ENCODE measurements at regions of chr6 and their contacts with region 1.

Region 1: DNA sequence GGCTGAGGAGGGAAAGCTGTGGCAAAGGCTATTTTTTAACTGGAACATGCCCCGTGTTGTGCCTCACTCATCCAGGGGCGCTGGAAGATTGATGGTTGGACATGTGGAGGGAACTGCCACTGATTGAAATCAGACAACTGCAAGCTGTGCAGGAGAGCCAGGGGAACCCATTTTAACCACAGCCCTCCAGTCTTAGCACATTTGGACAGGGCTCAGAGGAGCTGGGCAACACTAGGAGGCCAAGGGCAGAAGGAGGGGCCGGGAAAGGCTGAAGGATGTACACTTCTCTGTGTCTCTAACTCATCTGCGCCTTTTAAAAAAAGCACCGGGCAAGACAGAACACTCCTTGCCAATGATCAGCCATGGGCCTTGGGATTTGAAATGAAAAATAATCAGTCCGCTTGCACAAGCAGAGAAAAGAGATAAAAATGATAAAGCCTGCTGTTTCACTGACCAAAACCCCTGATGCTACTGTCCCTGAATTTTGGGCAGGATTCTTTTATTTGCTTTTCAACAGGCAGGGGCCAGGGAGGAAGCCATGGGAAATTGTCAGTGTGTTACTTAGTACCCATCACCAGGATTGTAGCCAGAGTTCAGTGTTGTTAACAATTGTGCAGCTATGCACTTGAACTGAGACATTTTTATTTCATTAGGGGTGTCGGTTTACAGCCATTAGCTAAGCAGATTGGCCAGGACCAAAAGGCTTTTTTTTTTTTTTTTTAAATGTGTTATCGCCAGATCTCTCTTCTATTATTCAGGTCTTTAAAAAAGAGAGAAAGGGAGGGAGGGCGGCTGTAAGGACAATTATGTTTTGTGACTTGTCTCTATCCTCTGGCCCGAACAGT is 109.3 kb upstream of the EYA4 start:
- DNase-seq: peak in 1 of 3 donors; percentile 48
- ATAC-seq: peak; percentile 64 to 65
- H3K4me3 ChIP-seq: no peak overlapping the region
- H3K27ac ChIP-seq: peak overlapping the region; percentile 92
- H3K4me1 ChIP-seq: peaks cover 4% of the 10 kb centered on the region
- H3K27me3 ChIP-seq: no peaks in the 10 kb centered on the region

Region 2: DNA sequence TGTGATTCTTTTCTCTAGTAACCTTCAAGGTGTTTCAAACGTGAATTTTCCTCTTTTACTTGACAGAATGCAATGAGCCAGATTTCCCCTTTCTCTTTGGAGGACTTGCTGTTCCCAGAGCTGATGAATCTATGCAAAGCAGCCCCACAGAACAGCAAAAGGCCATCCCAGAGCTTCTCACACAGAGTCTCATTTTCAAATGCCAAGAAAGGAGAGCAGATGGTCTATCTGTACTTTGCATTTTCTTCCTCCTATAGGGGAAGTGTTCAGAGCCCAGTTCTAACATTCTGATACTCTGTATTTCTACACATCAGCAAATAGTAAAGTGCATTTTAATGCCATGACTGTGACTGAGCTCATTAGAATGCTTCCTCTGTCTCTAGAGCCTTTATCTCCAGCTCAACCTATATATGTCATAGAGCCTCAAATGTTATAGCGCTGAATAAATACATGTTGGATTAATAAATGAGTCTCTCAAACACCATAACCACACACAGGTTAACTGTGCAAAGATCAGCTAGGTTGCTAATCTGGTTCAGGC is 27.5 kb after region 1 on chr6:
- intact Hi-C with region 1: loop called in 1 of 4 experiments (anchors 2 kb)
- DNase-seq: no peak
- ATAC-seq: no peak
- H3K4me3 ChIP-seq: no peak overlapping the region
- H3K27ac ChIP-seq: no peak overlapping the region
- H3K4me1 ChIP-seq: no peaks in the 10 kb centered on the region
- H3K27me3 ChIP-seq: no peaks in the 10 kb centered on the region